Panc1 (cell line): ENCODE measurements at regions of chr20 and their contacts with region 1.

Region 1: DNA sequence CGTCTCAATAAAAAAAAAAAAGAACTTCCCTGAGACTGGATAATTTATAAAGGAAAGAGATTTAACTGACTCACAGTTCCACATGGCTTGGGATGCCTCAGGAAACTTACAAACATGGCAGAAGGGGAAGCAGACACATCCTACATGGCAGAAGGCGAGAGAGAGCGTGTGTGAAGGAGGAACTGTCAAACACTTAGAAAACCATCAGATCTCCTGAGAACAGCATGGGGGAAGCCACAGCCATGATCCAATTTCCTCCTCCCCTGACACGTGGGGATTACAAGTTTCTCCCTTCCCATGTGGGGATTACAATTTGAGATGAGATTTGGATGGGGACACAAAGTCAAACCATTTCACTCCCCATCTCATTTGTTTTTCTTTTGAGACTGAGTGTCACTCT is 46.6 kb upstream of the TFAP2C start:
- DNase-seq: no peak
- ATAC-seq: no peak
- H3K4me3 ChIP-seq: no peak overlapping the region
- H3K27ac ChIP-seq: no peak overlapping the region
- H3K4me1 ChIP-seq: no peaks in the 10 kb centered on the region
- H3K27me3 ChIP-seq: no peaks in the 10 kb centered on the region
- CTCF ChIP-seq: no peak

Region 2: GRCh38 chr20:56801744-56802670 is 219.5 kb after region 1 on chr20:
- CTCF ChIA-PET with region 1: no interaction called
- POLR2A ChIA-PET with region 1: no interaction called
- in situ Hi-C with region 1: no loop called
- intact Hi-C with region 1: no loop called
- DNase-seq: no peak
- ATAC-seq: no peak
- H3K4me3 ChIP-seq: peak overlapping the region in 1 of 2 experiments; percentile 6; a peak in 2 of 4 replicates
- H3K27ac ChIP-seq: peak overlapping the region; percentile 45
- H3K4me1 ChIP-seq: peaks cover 16% of the 10 kb centered on the region
- H3K27me3 ChIP-seq: no peaks in the 10 kb centered on the region
- CTCF ChIP-seq: no peak

Region 3: DNA sequence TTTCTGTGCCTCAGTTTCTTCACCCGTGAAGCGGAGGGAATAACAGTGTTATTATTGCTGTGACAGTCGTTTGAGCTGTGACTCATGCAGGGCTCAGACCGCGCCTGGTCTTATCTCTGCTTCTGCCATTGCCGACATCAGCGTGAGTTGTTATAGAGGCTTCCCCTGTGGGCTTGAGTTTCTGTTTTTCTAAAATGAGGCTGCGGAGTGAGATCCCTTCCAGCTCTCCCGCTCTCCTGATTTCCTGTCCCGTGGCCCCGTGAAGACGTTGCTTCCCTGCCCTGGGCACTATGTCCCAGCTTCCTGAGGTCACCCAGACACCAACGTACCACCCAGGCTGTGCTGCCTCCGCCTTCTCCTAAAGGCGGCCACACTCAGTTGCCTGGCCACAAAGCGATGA is 405.4 kb after region 1 on chr20:
- CTCF ChIA-PET with region 1: interaction called, 13 read pairs
- POLR2A ChIA-PET with region 1: no interaction called
- in situ Hi-C with region 1: no loop called
- intact Hi-C with region 1: no loop called
- DNase-seq: no peak
- ATAC-seq: peak; percentile 51; the same call in 1 of the 2 replicates
- H3K4me3 ChIP-seq: no peak overlapping the region
- H3K27ac ChIP-seq: no peak overlapping the region
- H3K4me1 ChIP-seq: no peaks in the 10 kb centered on the region
- H3K27me3 ChIP-seq: no peaks in the 10 kb centered on the region; the same call in 1 of the 2 replicates
- CTCF ChIP-seq: no peak